Activated T-helper 1 cell treated with anti-CD3 and anti-CD28 coated beads, Interleukin-12 subunit alpha, Interleukin-12 subunit beta, Interleukin-2, Interleukin-4 antibody, amounts not matched to agents 30 ng/mL and 10 ng/mL and 1 ng/mL, durations not matched to agents 14 hours and 24 hours and 36 hours (primary cell): ENCODE measurements at regions of chr19 and their contacts with region 1.

Region 1: DNA sequence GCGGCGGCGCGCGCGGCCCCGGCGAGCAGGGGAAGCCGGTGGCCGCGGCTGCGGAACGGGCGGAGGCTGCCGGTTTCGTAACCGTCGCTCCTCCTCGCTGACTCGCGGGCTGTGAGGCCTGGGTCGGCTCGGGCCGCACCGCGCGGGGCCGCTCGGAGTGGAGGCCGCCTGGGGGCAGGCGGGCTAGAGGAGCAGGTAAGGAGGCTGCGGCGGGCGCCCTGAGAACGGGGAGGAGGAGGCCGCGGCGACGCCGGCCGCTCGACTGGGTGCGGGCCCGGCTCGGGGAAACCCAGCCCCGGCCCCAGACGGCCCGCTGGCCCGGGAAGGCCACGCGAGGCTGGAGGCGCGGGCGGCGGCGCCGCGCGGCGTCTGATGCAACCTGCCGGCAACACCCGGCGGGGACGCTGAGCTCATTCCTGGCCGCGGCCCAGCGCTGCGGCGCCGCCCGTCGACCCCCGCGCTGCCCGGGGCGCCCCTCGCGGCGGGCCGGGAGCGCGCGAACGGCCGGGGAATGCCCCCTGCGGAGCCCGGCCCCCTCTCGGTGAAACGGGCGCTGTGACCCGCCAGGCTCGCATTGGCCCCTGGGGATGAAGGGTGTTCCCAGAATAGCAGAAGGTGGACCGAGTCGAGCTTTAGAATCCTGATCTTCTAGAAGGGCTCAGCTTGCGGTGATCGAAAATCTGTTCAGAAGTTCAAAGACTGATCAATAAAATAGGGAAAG is at the start of gene CEBPG:
- DNase-seq: peak; percentile 60
- H3K4me3 Mint-ChIP-seq: peak within 1 kb of the TSS; percentile 93
- H3K27ac Mint-ChIP-seq: peak within 1 kb of the TSS; percentile 69
- H3K4me1 Mint-ChIP-seq: peaks cover 39% of the 10 kb centered on the region
- H3K27me3 Mint-ChIP-seq: no peaks in the 10 kb centered on the region
- total RNA-seq, gene CEBPG: 30.4 and 31.3 TPM in 2 replicates

Region 2: DNA sequence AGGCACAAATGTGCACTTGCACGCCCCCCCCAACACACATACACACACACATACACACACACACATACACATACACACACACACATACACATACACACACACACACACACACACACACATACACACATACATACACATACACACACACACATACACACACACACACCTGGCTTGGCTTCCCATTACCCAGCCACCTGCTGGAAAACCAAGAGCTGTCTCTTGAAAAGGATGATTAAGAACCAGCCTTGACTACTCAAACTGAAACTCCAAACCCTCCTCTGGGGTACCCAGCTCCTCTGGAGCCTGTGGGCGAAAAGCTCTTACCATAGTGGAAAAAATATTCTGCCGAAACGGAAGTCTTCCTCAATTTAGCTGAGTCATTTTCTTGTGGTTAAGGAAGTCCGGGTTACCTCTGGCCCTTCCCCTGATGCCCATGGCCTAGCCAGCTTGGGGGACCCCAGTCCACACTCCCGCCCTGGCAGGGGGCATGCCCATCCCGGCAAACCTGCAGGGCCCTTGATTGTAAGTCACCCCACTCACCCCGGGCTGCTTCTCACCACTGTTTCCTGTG is 93.4 kb before region 1 on chr19:
- intact Hi-C with region 1: loop called (anchors 1 kb)
- DNase-seq: peak; percentile 47
- H3K4me3 Mint-ChIP-seq: peak overlapping the region; percentile 34
- H3K27ac Mint-ChIP-seq: peak overlapping the region; percentile 86
- H3K4me1 Mint-ChIP-seq: peaks cover 20% of the 10 kb centered on the region
- H3K27me3 Mint-ChIP-seq: peaks cover 6% of the 10 kb centered on the region

Region 3: GRCh38 chr19:33521480-33522370 is 147.9 kb after region 1 on chr19 and contains the start of gene PEPD:
- intact Hi-C with region 1: loop called (anchors 5 kb)
- DNase-seq: peak; percentile 66
- H3K4me3 Mint-ChIP-seq: peak within 1 kb of the TSS; percentile 88
- H3K27ac Mint-ChIP-seq: peak within 1 kb of the TSS; percentile 16
- H3K4me1 Mint-ChIP-seq: peaks cover 16% of the 10 kb centered on the region
- H3K27me3 Mint-ChIP-seq: no peaks in the 10 kb centered on the region
- total RNA-seq, gene PEPD: 14.0 and 15.0 TPM in 2 replicates